Lower leg skin (tissue), 4 donors: ENCODE measurements at regions of chr3 and their contacts with region 1.

Region 1: GRCh38 chr3:10213156-10213792 is 35.0 kb upstream of the TATDN2 start:
- DNase-seq: no peak
- H3K4me3 ChIP-seq: no peak overlapping the region
- CTCF ChIP-seq: no peak
- POLR2A ChIP-seq: no peak

Region 2: DNA sequence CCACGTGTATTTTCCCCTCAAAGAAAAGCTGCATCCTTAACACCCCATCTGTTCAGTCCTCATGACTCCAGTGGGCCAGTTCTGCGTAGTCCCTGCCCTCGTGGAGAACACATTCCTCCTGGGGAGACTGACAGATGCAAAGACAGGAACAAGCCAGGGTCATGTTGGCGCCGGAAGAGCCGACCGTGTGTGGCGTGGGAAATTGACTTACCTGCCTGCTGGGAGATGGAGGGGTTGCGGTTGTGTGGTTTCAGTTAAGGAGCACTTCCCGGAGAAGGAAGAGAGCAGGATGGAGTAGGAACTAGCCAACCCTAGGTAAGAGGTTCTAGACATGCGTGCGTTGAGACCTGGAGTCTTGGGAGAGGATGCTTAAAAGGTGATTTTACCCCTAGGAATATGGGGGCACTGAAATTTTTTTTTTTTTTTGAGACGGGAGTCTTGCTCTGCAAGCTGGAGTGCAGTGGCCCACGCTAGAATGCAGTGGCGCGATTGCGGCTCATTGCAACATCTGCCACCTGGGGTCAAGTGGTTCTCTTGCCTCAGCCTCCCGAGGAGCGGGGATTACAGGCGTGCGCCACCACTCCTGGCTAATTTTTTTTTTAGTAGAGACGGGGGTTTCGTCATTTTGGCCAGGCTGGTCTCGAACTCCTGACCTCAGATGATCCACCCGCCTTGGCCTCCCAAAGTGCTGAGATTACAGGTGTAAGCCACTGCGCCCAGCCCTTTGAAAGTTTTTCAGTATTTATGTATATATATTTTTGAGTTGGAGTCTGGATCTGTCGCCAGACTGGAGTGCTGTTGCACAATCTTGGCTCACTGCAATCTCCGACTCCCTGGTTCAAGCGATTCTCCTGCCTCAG is 70.3 kb before region 1 on chr3:
- intact Hi-C with region 1: loop called (anchors 10 kb)
- DNase-seq: peak in 1 of 2 donors; percentile 87
- H3K4me3 ChIP-seq: peak overlapping the region; percentile 55
- CTCF ChIP-seq: no peak
- POLR2A ChIP-seq: no peak